Aorta (tissue), 5 donors: ENCODE measurements at regions of chr9 and their contacts with region 1.

Region 1: DNA sequence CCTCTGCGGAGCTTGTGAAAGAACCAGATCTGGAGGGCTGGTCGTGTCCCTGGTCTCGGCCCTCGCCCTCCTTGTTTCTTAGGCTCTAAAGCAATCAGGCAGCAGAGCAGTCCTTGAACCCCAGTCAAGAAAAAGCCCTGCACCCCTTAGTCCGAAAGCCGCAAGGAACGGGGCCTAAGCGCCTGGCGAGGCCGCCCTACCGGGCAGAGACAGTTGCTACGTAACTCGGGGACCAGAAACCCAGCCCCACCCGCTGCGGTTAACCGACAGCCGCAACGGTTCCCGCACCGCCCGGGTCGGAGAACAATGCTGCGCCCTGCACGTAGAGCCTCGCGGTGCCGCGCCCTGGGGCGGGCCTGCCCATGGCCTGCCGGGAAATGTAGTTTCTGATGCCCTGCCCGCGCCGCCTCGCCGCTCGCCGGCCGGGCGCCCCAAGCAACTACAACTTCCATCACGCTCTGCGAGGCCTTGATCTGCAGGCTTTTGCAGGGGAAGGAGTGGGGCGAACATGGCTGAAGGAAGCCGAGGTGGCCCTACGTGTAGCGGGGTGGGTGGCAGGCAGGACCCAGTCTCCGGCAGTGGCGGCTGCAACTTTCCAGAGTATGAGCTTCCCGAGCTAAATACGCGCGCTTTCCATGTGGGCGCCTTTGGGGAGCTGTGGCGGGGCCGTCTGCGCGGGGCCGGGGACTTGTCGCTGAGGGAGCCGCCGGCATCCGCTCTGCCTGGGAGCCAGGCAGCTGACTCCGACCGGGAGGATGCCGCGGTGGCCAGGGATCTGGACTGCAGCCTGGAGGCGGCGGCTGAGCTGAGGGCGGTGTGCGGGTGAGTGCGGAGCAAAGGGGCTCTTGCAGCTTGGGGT is at the start of gene SNAPC3:
- DNase-seq: peak; percentile 96 to 98
- ATAC-seq: peak; percentile 100
- H3K4me3 ChIP-seq: peak within 1 kb of the TSS; percentile 61 to 79
- H3K27ac ChIP-seq: peak within 1 kb of the TSS in 1 of 2 donors; percentile 96
- H3K4me1 ChIP-seq: no peaks in the 10 kb centered on the region
- H3K27me3 ChIP-seq: no peaks in the 10 kb centered on the region
- total RNA-seq, gene SNAPC3: 29.5 to 48.9 TPM

Region 2: DNA sequence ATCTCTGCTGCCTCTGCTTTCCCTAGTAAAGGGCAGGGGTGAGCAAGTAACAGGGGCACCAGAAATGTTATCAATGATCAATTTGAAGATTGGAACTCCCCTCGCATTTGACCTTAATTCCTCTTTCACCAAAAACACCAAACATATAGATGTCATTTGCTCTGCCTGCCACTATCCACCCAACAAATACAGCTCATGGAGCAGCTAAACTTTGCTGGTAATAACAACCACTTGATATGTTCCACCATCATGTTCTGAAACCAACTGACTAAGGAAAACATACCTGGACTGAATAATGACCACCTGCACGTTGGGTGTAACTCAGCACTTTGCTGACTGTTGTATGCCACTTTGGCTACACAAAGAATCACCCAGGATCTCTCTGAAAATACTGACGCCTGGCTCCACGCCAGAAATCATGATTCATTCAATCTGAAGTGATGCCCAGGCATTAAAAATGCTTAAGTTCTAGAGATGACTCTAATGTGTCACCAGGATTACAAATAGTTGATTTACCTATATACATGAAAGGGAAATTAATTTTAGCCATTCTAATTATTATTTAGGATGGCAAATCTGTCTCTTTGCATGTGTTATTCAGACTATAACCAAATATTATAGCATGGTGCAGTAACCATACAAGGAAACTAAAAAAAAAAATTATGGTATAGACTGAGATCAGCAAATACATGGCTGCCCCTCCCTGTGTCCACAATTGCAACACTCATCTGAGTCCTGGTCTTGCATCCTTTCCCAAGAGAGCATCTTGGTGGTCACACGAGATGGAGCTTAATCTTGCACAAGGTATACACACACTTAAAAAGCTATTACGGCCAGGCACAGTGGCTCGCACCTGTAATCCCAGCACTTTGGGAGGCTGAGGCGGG is 72.5 kb before region 1 on chr9:
- intact Hi-C with region 1: loop called (anchors 5 to 10 kb)
- DNase-seq: peak in 1 of 2 donors; percentile 56
- ATAC-seq: no peak
- H3K4me3 ChIP-seq: no peak overlapping the region
- H3K27ac ChIP-seq: no peak overlapping the region
- H3K4me1 ChIP-seq: no peaks in the 10 kb centered on the region
- H3K27me3 ChIP-seq: no peaks in the 10 kb centered on the region

Region 3: GRCh38 chr9:15370466-15371447 is 51.8 kb before region 1 on chr9:
- intact Hi-C with region 1: loop called in 1 of 2 experiments (anchors 5 kb)
- DNase-seq: no peak
- ATAC-seq: no peak
- H3K4me3 ChIP-seq: no peak overlapping the region
- H3K27ac ChIP-seq: no peak overlapping the region
- H3K4me1 ChIP-seq: no peaks in the 10 kb centered on the region
- H3K27me3 ChIP-seq: no peaks in the 10 kb centered on the region